ENCODE measurements at regions of chr3 and their contacts with region 1.

Region 1: GRCh38 chr3:45507820-45508317 is 86.7 kb upstream of the LIMD1 start:
- DNase-seq: peak; percentile 87
- ATAC-seq: peak; percentile 64
- H3K4me3 ChIP-seq: no peak overlapping the region
- H3K27ac ChIP-seq: peak overlapping the region; percentile 27
- H3K4me1 ChIP-seq: peaks cover 29% of the 10 kb centered on the region
- H3K27me3 ChIP-seq: no peaks in the 10 kb centered on the region
- CTCF ChIP-seq: peak; percentile 62
- POLR2A ChIP-seq: peak; percentile 55
- RAD21 ChIP-seq: peak; percentile 64

Region 2: GRCh38 chr3:45043728-45044299 is 464.1 kb before region 1 on chr3:
- CTCF ChIA-PET with region 1: interaction called, 27 read pairs
- POLR2A ChIA-PET with region 1: no interaction called
- dilution Hi-C with region 1: loop called (anchors 25 kb)
- in situ Hi-C with region 1: loop called (anchors 5 kb)
- intact Hi-C with region 1: no loop called
- DNase-seq: peak; percentile 94
- ATAC-seq: peak; percentile 75
- H3K4me3 ChIP-seq: no peak overlapping the region
- H3K27ac ChIP-seq: peak overlapping the region; percentile 100
- H3K4me1 ChIP-seq: peaks cover 24% of the 10 kb centered on the region
- H3K27me3 ChIP-seq: no peaks in the 10 kb centered on the region
- CTCF ChIP-seq: peak; percentile 54
- POLR2A ChIP-seq: no peak
- RAD21 ChIP-seq: peak; percentile 56

Region 3: DNA sequence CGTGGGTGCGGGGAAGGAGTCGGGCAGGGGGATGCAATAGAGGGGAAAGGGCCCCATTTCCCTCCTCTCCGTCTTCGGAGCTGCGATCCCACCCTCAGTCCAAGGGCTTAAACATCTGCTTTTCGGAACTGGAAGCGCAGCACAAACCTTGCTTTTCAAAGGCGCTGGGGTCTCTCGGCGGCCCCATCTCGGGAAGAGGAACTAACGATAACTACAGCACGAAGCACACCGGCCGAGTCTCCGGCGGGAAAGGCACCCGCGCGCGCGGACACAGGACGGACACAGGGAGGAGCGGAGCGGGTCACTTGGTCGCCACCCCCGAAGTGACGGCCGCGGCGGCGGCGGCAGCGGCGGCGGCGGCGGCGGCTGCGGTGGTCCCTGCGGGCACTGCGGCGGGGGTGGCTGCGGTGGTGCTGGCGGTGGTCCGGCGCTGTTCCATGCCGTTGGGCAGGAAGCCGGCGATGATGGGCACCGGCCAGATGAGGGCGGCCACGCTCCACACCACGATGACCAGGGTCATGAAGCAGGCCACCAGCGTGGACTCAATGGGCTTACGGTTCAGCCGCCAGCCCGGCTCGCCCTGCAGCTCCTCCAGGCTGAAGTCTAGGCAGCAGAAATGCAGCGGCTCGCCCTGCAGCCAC is 282.9 kb before region 1 on chr3:
- CTCF ChIA-PET with region 1: interaction called, 4 read pairs
- POLR2A ChIA-PET with region 1: interaction called, 5 read pairs
- dilution Hi-C with region 1: no loop called
- in situ Hi-C with region 1: loop called (anchors 5 kb)
- intact Hi-C with region 1: loop called (anchors 2 kb)
- DNase-seq: peak; percentile 78
- ATAC-seq: peak; percentile 64
- H3K4me3 ChIP-seq: peak overlapping the region; percentile 72
- H3K27ac ChIP-seq: peak overlapping the region; percentile 89
- H3K4me1 ChIP-seq: peaks cover 10% of the 10 kb centered on the region
- H3K27me3 ChIP-seq: no peaks in the 10 kb centered on the region
- CTCF ChIP-seq: peak; percentile 73
- POLR2A ChIP-seq: peak; percentile 41; the same call in 1 of the 2 replicates
- RAD21 ChIP-seq: peak; percentile 83

Region 4: DNA sequence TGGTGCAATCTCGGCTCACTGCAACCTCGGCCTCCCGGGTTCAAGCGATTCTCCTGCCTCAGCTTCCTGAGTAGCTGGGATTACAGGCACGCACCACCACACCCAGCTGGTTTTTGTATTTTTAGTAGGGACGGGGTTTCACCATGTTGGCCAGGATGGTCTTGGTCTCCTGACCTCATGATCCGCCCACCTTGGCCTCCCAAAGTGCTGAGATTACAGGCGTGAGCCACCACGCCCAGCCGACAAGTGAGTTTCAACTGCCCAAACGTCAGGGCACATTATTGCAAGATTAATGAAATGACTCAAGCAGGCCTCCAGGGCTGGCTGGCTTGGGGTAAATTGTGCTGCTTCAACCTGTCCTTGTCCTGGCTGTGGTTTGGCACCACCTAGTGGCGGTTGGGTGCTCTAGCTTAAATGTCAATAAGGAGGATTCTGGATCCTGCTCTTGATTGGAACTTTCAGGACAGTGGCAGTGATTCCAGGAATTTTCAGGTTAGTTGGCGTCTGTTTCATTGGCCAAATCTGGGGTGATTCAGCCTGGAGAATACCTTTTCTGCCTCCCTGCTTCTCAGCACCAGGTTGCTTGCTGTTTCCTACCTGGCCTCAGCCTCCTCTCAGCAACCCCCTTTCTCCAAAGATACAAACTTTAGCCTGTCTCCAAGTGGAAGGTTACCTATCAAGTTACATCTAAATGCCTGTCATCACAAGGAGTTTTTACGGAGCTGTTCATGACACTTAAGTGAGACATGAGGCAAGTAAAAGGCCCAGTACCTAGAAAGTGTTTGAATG is 148.9 kb after region 1 on chr3:
- CTCF ChIA-PET with region 1: interaction called, 16 read pairs
- POLR2A ChIA-PET with region 1: no interaction called
- dilution Hi-C with region 1: no loop called
- in situ Hi-C with region 1: loop called (anchors 5 kb)
- intact Hi-C with region 1: loop called (anchors 1 kb)
- DNase-seq: peak; percentile 96
- ATAC-seq: peak; percentile 43
- H3K4me3 ChIP-seq: no peak overlapping the region
- H3K27ac ChIP-seq: no peak overlapping the region
- H3K4me1 ChIP-seq: peaks cover 28% of the 10 kb centered on the region
- H3K27me3 ChIP-seq: no peaks in the 10 kb centered on the region
- CTCF ChIP-seq: peak; percentile 96
- POLR2A ChIP-seq: peak; percentile 65
- RAD21 ChIP-seq: peak; percentile 99

Region 5: GRCh38 chr3:45826321-45826720 is 318.5 kb after region 1 on chr3:
- CTCF ChIA-PET with region 1: no interaction called
- POLR2A ChIA-PET with region 1: no interaction called
- dilution Hi-C with region 1: no loop called
- in situ Hi-C with region 1: no loop called
- intact Hi-C with region 1: loop called (anchors 5 kb)
- DNase-seq: no peak
- ATAC-seq: no peak
- H3K4me3 ChIP-seq: no peak overlapping the region
- H3K27ac ChIP-seq: no peak overlapping the region
- H3K4me1 ChIP-seq: peaks cover under 1% of the 10 kb centered on the region; the same call in 1 of the 2 replicates
- H3K27me3 ChIP-seq: no peaks in the 10 kb centered on the region
- CTCF ChIP-seq: no peak
- POLR2A ChIP-seq: no peak
- RAD21 ChIP-seq: no peak

Region 6: DNA sequence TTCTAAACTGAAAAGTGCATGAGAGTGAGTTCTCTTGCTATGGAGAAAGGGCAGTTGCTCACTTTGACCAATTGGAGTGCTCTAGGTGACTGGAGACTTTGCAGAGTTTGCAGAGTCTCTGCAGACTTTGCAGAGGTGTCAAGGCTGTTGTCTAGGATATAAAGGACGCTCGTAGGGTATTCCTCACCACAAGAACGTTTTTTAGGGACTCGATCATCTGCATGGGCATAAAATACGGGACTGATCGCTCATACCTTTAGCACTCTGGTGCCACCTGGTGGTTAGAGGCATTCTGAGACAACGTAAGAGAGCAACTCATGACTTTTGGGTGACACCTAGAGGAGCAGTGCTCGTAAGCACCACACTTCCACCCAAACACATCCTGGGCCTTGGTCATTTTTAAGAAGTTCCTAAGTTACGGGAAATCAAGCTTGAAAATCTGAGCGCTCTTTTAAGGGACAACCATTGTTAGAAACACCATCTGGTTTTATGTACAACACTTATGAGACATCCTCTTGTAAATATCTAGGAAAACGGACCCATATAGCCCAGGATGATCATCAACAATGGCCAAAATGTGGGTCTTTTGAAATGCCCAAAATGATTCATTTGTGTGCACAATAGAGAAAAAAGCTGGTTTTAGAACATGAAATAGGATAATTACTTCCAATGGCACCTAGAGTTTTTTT is 571.0 kb after region 1 on chr3:
- CTCF ChIA-PET with region 1: no interaction called
- POLR2A ChIA-PET with region 1: no interaction called
- dilution Hi-C with region 1: no loop called
- in situ Hi-C with region 1: loop called (anchors 10 kb)
- intact Hi-C with region 1: loop called (anchors 1 kb)
- DNase-seq: peak; percentile 93
- ATAC-seq: peak; percentile 97
- H3K4me3 ChIP-seq: no peak overlapping the region
- H3K27ac ChIP-seq: no peak overlapping the region
- H3K4me1 ChIP-seq: no peaks in the 10 kb centered on the region
- H3K27me3 ChIP-seq: peaks cover 9% of the 10 kb centered on the region
- CTCF ChIP-seq: peak; percentile 100
- POLR2A ChIP-seq: peak; percentile 57; the same call in 1 of the 2 replicates
- RAD21 ChIP-seq: peak; percentile 100